Heart left ventricle (tissue), 16 donors: ENCODE measurements at regions of chr20 and their contacts with region 1.

Region 1: GRCh38 chr20:14142171-14142570 is 146.9 kb downstream of the MACROD2 start:
- DNase-seq: peak in 2 of 5 donors; percentile 25 to 28
- ATAC-seq: peak in 3 of 4 donors; percentile 88
- H3K4me3 ChIP-seq: no peak overlapping the region
- H3K27ac ChIP-seq: no peak overlapping the region
- H3K4me1 ChIP-seq: no peaks in the 10 kb centered on the region
- H3K27me3 ChIP-seq: no peaks in the 10 kb centered on the region
- CTCF ChIP-seq: peak; percentile 16 to 62 (median 44)
- POLR2A ChIP-seq: no peak

Region 2: DNA sequence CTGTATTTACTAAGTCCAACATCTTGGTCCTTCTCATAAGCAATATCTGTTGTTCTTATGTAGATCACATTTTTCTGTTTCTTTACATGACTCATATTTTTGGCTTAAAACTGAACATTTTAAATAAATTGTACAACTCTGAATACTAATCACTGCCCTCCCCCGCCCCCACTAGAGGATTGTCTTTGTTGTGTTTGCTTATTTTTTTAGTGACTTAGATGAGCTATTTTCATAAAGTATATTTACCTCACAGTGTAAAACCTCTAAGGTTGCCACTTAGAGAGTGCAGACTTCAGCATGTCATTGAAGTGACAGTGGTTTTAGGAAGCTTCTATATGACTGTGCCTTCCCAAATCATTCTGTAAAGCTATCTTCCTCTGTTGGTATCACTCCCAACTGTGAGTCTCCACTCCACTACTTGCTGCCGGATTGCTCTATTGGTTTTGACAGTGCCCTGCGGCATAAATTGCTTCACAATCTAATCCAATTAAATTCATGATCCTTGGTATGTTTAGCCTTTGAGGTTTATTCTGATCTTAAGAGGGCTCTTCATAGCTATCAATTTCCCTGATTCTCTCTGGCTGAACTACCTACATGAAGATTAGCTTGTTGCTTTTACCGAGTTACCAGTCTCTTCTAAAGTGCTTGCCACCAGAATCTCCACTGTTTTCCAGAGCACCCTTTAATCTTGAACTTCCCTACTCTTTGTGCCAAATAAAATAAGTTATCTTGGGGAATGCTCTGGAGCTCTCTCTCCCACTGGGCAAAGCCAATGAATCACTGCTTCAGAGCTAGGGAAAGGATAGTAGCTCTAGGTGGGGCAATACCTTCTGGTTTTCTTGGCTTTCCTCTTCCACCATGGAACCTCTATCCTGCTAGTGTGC is 1100.4 kb before region 1 on chr20:
- intact Hi-C with region 1: no loop called
- DNase-seq: no peak
- ATAC-seq: no peak
- H3K4me3 ChIP-seq: no peak overlapping the region
- H3K27ac ChIP-seq: no peak overlapping the region
- H3K4me1 ChIP-seq: peaks cover 0 to 9% (median 0%) of the 10 kb centered on the region in 12 donors
- H3K27me3 ChIP-seq: no peaks in the 10 kb centered on the region
- CTCF ChIP-seq: no peak
- POLR2A ChIP-seq: no peak

Region 3: GRCh38 chr20:13960525-13960924 is 181.6 kb before region 1 on chr20:
- intact Hi-C with region 1: no loop called
- DNase-seq: no peak
- ATAC-seq: no peak
- H3K4me3 ChIP-seq: no peak overlapping the region
- H3K27ac ChIP-seq: no peak overlapping the region
- H3K4me1 ChIP-seq: no peaks in the 10 kb centered on the region
- H3K27me3 ChIP-seq: no peaks in the 10 kb centered on the region
- CTCF ChIP-seq: no peak
- POLR2A ChIP-seq: no peak

Region 4: DNA sequence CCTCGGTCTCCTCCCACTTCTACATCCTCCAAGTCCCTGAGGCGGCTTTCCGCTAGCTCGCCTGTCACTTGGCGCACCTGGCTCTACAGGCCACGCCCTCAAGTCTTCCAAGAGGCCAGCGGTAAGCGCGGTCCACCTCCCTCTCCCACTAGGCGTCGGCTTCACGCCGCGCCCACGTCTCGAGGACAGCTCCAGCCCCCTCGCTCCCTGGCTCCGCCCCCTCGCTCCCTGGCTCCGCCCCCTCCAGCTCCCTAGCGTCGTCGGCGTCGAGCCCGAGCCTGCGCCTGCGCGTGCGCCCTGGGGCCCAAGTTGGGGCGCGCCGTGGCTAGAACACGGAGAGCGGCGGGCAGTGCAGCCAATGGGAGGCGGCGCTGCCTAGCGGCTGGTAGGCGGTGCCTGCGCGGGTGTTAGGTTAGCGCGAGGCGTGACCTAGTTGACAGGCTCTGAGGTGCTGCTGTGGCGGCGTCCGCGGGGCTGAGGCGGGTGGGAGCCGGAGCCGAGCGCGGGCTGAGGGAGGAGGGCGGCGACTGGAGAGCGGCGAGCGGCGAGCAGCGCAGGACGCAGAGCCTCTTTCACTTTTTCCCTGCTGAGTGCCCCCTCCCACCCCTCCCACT is 147.0 kb before region 1 on chr20 and contains the start of gene MACROD2:
- intact Hi-C with region 1: no loop called
- DNase-seq: peak; percentile 78 to 92 (median 91)
- ATAC-seq: peak; percentile 97 to 100 (median 99)
- H3K4me3 ChIP-seq: peak within 1 kb of the TSS; percentile 42 to 79 (median 64)
- H3K27ac ChIP-seq: peak within 1 kb of the TSS in 5 of 12 donors; percentile 39 to 71 (median 66)
- H3K4me1 ChIP-seq: peaks cover 0 to 16% (median 0%) of the 10 kb centered on the region in 12 donors
- H3K27me3 ChIP-seq: peaks cover 0 to 18% (median 0%) of the 10 kb centered on the region in 9 donors
- CTCF ChIP-seq: peak in 2 of 12 donors; percentile 3 to 6
- POLR2A ChIP-seq: peak in 1 of 2 donors; percentile 66
- total RNA-seq, gene MACROD2: 1.2 to 5.4 (median 2.6) TPM

Region 5: DNA sequence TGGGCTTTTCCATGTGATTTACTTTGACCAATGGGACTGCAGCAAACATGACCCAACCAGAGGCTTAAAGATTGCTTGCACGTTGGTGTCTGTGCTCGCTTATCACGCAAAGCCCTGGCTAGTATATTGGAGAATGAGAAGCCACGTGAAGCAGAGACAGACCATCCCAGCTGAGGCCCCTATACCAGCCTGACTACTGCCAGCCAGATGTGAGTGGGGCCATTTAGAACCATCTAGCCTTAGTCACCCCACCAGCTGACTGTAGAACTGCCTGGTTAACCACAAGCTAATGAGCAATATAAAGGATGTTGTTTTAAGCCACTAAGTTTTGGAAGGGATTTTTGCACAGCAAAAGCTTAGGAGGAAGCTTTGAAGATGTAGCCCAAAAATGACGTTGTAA is 72.4 kb before region 1 on chr20:
- intact Hi-C with region 1: no loop called
- DNase-seq: no peak
- ATAC-seq: no peak
- H3K4me3 ChIP-seq: no peak overlapping the region
- H3K27ac ChIP-seq: no peak overlapping the region
- H3K4me1 ChIP-seq: no peaks in the 10 kb centered on the region
- H3K27me3 ChIP-seq: no peaks in the 10 kb centered on the region
- CTCF ChIP-seq: no peak
- POLR2A ChIP-seq: no peak

Region 6: DNA sequence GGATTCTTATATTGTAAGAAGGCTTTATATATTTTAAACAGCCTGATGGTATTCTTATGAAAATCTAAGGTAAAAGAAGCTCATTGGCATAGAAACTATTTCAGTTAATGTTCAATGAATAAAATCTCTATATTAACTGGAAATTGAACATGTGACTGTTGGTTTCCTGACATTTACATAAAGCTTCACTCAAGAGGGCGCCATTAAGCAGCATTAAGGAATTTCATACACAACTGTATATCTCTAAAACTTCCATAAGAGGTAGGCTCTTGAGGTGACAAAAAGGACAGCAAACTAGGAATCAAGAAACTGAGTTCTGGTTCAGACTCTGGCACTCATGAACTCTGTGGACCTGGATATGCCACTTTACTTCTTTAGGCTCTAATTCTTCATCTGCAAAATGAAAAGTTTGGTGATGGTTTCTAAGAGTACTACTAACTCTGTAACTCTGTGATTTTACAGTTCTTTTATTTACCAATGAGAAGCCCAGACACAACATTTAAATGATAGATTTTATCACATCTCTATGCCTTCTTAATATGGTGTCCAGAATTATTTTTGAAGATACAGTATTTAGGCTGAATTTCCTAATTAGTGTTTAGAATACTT is 47.7 kb after region 1 on chr20:
- intact Hi-C with region 1: loop called in 1 of 10 experiments (anchors 5 kb)
- DNase-seq: no peak
- ATAC-seq: no peak
- H3K4me3 ChIP-seq: no peak overlapping the region
- H3K27ac ChIP-seq: no peak overlapping the region
- H3K4me1 ChIP-seq: no peaks in the 10 kb centered on the region
- H3K27me3 ChIP-seq: no peaks in the 10 kb centered on the region
- CTCF ChIP-seq: peak in 5 of 12 donors; percentile 7 to 33 (median 17)
- POLR2A ChIP-seq: no peak